ENCODE measurements at regions of chr17 and their contacts with region 1.

Region 1: DNA sequence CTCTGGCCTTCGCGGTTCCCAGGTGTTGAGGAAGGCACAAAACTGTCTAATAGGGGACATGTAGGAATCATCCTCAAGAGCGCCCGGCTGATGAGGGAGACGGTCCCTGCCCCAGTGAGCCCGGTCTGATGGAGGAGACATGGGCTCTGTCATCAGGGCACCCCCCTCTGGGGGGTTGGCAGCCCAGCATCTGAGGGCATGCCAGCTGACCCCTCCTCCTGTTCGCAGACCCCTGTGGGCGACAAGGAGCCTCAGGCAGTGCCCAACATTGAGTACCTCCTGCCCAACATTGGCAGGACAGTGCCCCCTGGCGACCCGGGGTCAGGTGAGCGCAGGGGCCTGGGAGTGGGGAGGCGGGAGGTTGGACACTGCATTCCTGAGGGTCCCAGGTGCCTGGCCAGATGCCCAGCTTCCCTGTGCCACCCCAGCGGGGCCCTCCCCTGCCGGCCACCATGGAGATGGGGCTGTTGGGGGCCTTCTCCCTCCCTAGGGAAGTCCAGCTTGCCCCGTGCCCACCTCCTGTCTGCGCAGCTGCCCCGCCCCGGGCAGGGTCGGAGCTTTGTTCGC is 70.0 kb downstream of the ARHGAP23 start:
- DNase-seq: no peak
- CTCF ChIP-seq: no peak

Region 2: GRCh38 chr17:38315497-38315896 is 182.8 kb before region 1 on chr17:
- CTCF ChIA-PET with region 1: no interaction called
- POLR2A ChIA-PET with region 1: no interaction called
- DNase-seq: no peak
- CTCF ChIP-seq: no peak

Region 3: DNA sequence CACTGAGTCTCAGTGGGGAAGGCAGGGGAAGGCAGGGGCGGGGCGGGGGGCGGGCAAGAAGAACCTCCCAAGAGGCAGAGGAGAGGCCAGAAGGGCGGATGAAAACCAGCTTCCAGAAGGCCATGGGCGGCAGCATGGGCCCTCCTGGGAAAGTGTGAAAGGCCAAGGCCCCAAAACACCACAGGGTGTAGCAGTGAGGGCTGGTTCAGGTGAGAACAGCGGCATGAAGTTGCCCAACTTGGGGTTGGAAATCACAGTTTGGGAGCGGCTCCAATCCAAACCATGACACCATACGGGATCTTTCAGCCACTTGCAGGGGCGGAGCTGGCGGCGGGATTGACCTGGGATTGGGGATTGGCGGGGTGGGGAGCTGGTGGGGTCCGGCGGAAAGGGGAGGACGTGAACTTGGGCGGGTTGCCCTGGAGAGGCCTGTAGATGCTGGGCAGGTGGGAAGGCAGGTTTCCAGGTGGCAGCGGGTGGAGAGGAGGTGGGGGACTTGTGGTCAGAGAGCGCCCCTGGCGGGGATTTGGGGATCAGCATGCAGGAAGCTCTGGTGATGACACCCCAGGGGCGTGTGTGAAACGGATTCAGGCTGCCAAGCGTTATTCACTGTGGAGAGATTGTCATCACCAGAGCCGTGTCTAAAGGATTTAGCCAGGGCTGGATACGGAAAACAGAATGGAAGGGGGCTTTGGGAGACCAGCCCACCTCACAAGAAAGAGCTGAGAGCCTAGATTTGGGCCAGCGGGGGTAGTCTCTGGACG is 10.9 kb after region 1 on chr17:
- CTCF ChIA-PET with region 1: interaction called, 15 read pairs
- POLR2A ChIA-PET with region 1: no interaction called
- DNase-seq: peak; percentile 88
- CTCF ChIP-seq: peak; percentile 52

Region 4: GRCh38 chr17:38748149-38748891 is 250.1 kb after region 1 on chr17 and contains the start of gene PCGF2:
- CTCF ChIA-PET with region 1: no interaction called
- POLR2A ChIA-PET with region 1: no interaction called
- DNase-seq: no peak
- CTCF ChIP-seq: no peak